MCF 10A (cell line): ENCODE measurements at regions of chr18 and their contacts with region 1.

Region 1: DNA sequence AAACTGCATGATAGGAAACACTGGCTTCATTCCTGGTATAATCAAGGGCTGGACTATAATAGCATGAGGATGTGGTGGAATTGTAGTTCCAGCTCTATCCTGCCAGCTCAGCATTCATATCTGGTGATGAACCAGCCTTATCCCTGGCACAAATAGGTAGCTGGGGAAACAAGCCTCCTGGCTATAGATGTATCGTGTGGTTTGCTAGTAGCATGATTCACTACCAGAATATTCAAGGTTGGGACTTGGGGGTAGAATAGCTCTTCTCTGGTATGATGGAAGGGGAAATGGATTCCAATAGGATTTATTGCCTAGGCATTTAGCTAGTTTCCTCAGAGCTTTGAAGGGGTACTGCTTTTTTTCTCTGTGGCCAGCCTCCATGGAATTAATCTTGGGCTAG is 532.8 kb downstream of the FBXO15 start:
- DNase-seq: peak; percentile 97
- H3K4me3 Mint-ChIP-seq: no peak overlapping the region
- H3K27ac Mint-ChIP-seq: peak overlapping the region; percentile 74
- H3K4me1 Mint-ChIP-seq: peaks cover 39% of the 10 kb centered on the region
- H3K27me3 Mint-ChIP-seq: no peaks in the 10 kb centered on the region
- CTCF ChIP-seq: no peak

Region 2: GRCh38 chr18:73646772-73647171 is 32.0 kb after region 1 on chr18:
- CTCF ChIA-PET with region 1: interaction called, 4 read pairs
- POLR2A ChIA-PET with region 1: interaction called, 34 read pairs
- intact Hi-C with region 1: no loop called
- DNase-seq: peak; percentile 60
- H3K4me3 Mint-ChIP-seq: peak overlapping the region; percentile 12
- H3K27ac Mint-ChIP-seq: peak overlapping the region; percentile 63
- H3K4me1 Mint-ChIP-seq: peaks cover 22% of the 10 kb centered on the region
- H3K27me3 Mint-ChIP-seq: no peaks in the 10 kb centered on the region
- CTCF ChIP-seq: no peak

Region 3: GRCh38 chr18:73669299-73669698 is 54.5 kb after region 1 on chr18:
- CTCF ChIA-PET with region 1: no interaction called
- POLR2A ChIA-PET with region 1: interaction called, 14 read pairs
- intact Hi-C with region 1: no loop called
- DNase-seq: peak; percentile 87
- H3K4me3 Mint-ChIP-seq: no peak overlapping the region
- H3K27ac Mint-ChIP-seq: peak overlapping the region; percentile 46
- H3K4me1 Mint-ChIP-seq: peaks cover 37% of the 10 kb centered on the region
- H3K27me3 Mint-ChIP-seq: no peaks in the 10 kb centered on the region
- CTCF ChIP-seq: no peak

Region 4: DNA sequence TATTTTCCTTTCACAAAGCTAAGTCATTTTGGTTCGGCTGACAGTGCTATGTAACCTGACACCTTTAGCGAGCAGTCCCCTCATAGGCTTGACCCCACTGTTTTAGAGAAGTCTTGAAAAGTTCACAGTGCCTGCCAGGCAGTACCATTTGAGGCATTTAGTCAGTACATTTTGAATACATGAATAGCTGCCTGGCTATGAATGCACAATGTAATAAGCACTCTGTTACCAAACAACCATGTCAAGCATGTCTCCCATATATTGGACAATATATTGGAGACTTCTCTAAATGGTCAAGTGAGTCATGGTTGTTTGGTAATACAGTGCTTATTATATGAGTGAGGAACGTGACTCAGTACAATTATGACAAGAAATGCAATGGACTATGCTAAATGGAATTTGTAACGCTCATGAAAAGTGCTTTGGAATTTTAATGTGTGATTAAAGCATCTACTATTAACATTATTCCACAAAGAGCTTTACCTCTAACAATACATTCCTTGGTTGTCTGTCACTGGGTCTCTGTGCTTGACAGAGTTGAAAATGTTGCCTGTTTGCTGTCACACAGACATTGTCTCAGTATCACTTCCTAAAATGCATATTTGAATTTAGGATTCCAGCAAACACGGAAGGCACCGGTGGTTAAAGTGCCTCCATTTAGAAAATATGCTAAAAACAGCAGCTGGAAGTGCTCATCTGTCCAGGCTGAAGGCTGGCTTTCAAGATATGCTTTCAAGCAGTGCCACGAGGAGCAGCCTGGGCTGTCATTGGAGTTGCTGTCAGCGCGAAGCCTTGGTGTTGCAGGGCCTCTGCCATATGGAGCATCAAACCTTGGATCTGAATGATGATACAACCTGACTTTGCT is 74.3 kb after region 1 on chr18:
- CTCF ChIA-PET with region 1: interaction called, 3 read pairs
- POLR2A ChIA-PET with region 1: interaction called, 8 read pairs
- intact Hi-C with region 1: loop called (anchors 10 kb)
- DNase-seq: peak; percentile 82
- H3K4me3 Mint-ChIP-seq: no peak overlapping the region
- H3K27ac Mint-ChIP-seq: no peak overlapping the region
- H3K4me1 Mint-ChIP-seq: peaks cover 22% of the 10 kb centered on the region
- H3K27me3 Mint-ChIP-seq: no peaks in the 10 kb centered on the region
- CTCF ChIP-seq: no peak

Region 5: DNA sequence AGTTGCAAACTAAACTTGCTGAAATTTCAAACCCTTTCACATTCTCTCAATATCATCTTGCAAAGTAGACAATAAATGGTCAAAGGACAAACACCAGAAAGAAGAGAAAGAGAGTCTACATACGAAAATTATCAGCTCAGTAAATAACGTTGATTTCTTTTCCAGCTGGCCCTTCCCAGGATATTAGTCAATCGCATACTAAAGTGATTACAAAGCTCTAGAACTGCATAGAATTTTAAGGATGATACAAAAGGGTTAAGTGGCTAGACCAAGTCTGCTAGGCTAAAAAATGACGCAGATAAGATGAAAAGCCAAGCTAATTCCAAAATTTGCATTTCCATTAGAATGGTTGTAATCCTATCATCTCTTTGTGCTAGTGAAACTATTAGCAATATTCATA is 127.1 kb after region 1 on chr18:
- CTCF ChIA-PET with region 1: no interaction called
- POLR2A ChIA-PET with region 1: no interaction called
- intact Hi-C with region 1: loop called (anchors 10 kb)
- DNase-seq: peak; percentile 25
- H3K4me3 Mint-ChIP-seq: no peak overlapping the region
- H3K27ac Mint-ChIP-seq: no peak overlapping the region
- H3K4me1 Mint-ChIP-seq: peaks cover 15% of the 10 kb centered on the region
- H3K27me3 Mint-ChIP-seq: no peaks in the 10 kb centered on the region
- CTCF ChIP-seq: no peak